Endothelial cell of umbilical vein (primary cell): ENCODE measurements at regions of chr6 and their contacts with region 1.

Region 1: GRCh38 chr6:142692942-142693341 is 252.0 kb downstream of the HIVEP2 start:
- DNase-seq: peak; percentile 85
- H3K4me3 ChIP-seq: peak overlapping the region in 1 of 3 experiments; percentile 2
- H3K27ac ChIP-seq: peak overlapping the region; percentile 85
- H3K4me1 ChIP-seq: peaks cover 13% of the 10 kb centered on the region
- H3K27me3 ChIP-seq: no peaks in the 10 kb centered on the region
- CTCF ChIP-seq: peak; percentile 80 to 88
- POLR2A ChIP-seq: no peak

Region 2: GRCh38 chr6:142659661-142660060 is 33.3 kb before region 1 on chr6:
- CTCF ChIA-PET with region 1: no interaction called
- POLR2A ChIA-PET with region 1: no interaction called
- dilution Hi-C with region 1: no loop called
- intact Hi-C with region 1: no loop called
- DNase-seq: no peak
- H3K4me3 ChIP-seq: no peak overlapping the region
- H3K27ac ChIP-seq: no peak overlapping the region
- H3K4me1 ChIP-seq: no peaks in the 10 kb centered on the region
- H3K27me3 ChIP-seq: peaks cover 10% of the 10 kb centered on the region in 2 experiments
- CTCF ChIP-seq: no peak
- POLR2A ChIP-seq: no peak

Region 3: DNA sequence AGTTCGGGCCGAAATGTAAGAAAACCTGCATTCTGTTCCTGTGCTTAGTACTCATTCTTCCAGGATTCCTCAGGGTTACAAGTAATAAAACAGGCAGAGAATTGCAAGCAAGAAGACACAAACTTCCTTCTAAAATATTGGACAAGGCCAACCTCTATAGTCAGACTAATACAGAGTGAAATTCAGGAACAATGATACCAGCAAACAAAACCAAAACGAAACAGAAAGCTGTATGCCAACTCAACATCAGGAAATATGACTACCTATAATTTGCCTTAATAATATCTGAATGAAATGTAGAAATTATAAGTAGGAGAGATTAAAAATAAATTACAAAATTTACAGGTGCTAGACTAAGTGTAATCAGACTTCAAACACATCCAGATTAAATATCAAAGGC is 13.3 kb after region 1 on chr6:
- CTCF ChIA-PET with region 1: interaction called, 16 read pairs
- POLR2A ChIA-PET with region 1: no interaction called
- dilution Hi-C with region 1: no loop called
- intact Hi-C with region 1: no loop called
- DNase-seq: no peak
- H3K4me3 ChIP-seq: no peak overlapping the region
- H3K27ac ChIP-seq: no peak overlapping the region
- H3K4me1 ChIP-seq: peaks cover 7% of the 10 kb centered on the region
- H3K27me3 ChIP-seq: no peaks in the 10 kb centered on the region
- CTCF ChIP-seq: no peak
- POLR2A ChIP-seq: no peak

Region 4: DNA sequence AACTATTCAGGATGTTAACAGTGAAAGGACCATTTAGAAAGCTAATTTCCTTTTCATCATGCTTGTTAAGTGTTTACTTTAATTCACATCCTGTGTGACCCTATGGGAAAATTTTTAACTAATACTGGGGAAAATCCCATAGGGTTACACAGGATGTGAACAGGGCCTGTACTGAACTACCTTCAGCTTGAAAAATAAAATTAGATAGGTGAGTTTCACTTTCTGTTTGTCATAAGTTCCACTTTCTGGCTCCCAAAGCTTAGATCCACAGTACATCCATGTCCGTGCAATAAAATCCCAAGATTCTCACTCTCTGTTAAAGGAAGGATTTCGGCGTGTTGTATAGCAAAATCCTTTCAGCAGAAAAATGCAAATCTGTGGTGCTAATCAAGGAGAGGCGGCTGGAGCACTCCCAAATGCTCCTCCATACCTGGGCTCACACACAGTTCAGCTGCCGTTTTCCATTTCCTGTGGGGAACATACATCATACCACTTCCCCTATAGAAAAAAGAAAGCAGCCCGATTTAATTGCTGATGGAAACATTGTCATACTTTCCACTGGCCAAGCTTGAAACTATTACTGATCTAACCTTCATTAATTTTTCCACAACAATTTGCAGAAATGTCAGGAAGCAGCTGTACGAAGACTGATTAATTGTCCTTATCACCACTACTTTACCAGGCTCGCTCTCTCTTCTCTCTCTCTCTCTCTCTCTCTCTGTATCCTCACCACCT is 126.8 kb after region 1 on chr6:
- CTCF ChIA-PET with region 1: interaction called, 8 read pairs
- POLR2A ChIA-PET with region 1: no interaction called
- dilution Hi-C with region 1: no loop called
- intact Hi-C with region 1: loop called (anchors 1 kb)
- DNase-seq: peak; percentile 95
- H3K4me3 ChIP-seq: peak overlapping the region; percentile 16 to 71 (median 27)
- H3K27ac ChIP-seq: peak overlapping the region; percentile 93
- H3K4me1 ChIP-seq: peaks cover 16% of the 10 kb centered on the region
- H3K27me3 ChIP-seq: no peaks in the 10 kb centered on the region
- CTCF ChIP-seq: no peak
- POLR2A ChIP-seq: no peak

Region 5: DNA sequence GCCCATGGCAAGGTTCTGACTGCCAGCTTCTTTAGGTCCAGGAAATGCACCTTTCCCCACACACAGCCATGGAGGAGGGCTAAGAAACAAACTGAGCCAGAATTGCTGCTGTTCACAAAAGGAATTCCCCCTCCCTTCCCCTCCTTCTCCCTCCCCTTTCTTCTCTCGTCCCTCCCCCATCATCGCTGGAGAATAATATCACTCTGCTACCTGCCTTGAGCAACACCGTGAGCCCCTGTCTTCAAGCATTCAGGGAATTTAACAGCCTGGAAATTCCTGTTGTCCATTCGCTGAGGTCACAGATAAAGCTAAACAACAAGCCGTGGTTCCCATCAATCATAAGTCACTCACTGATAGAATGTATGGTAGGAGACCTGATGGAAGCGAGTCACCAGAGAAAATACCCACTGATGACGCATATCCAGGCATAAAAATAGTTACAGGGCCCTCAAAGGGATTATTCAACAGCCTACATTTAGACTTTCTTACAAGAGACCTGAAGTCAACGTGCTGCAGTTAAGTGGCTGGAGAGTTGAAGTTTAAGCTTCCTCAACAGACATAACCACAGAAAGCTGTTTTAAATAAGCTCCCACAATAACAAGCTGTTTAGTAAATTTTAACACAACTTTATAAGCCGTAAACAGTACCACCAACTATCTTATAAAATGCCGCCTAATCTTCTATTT is 192.4 kb after region 1 on chr6:
- CTCF ChIA-PET with region 1: interaction called, 21 read pairs
- POLR2A ChIA-PET with region 1: no interaction called
- dilution Hi-C with region 1: no loop called
- intact Hi-C with region 1: loop called (anchors 1 kb)
- DNase-seq: peak; percentile 98
- H3K4me3 ChIP-seq: peak overlapping the region in 2 of 3 experiments; percentile 1 to 9
- H3K27ac ChIP-seq: peak overlapping the region; percentile 89
- H3K4me1 ChIP-seq: peaks cover 16% of the 10 kb centered on the region
- H3K27me3 ChIP-seq: no peaks in the 10 kb centered on the region
- CTCF ChIP-seq: no peak
- POLR2A ChIP-seq: peak; percentile 49

Region 6: DNA sequence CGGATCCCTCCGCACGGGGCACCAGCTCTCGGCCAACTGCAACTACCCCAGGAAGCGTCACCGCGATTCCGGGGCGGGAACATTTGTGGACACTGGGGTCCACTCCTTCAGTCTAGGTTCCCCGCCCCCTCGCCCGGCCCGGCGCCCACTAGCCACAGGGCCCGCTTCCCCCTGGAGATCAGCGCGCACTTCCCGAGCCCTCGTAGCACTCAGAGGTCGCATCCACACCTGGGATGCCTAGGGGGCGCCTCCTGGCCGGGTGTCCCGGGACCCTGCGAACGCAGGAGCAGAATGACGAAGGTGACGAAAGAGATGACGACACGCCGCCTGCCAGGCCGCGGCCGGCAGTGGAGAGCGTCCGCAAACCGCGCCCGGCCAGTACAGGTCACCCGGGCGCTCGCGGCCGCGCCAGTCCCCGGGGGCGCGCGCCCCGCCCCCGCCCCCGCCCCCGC is 367.4 kb after region 1 on chr6:
- CTCF ChIA-PET with region 1: no interaction called
- POLR2A ChIA-PET with region 1: no interaction called
- dilution Hi-C with region 1: no loop called
- intact Hi-C with region 1: loop called (anchors 1 kb)
- DNase-seq: peak; percentile 82
- H3K4me3 ChIP-seq: peak overlapping the region; percentile 35 to 76 (median 67)
- H3K27ac ChIP-seq: peak overlapping the region; percentile 83
- H3K4me1 ChIP-seq: peaks cover 10% of the 10 kb centered on the region
- H3K27me3 ChIP-seq: no peaks in the 10 kb centered on the region
- CTCF ChIP-seq: peak in 1 of 2 donors; percentile 15
- POLR2A ChIP-seq: no peak

Region 7: GRCh38 chr6:143427109-143427817 is 734.3 kb after region 1 on chr6:
- CTCF ChIA-PET with region 1: interaction called, 105 read pairs
- POLR2A ChIA-PET with region 1: no interaction called
- dilution Hi-C with region 1: no loop called
- intact Hi-C with region 1: loop called (anchors 1 kb)
- DNase-seq: peak; percentile 66
- H3K4me3 ChIP-seq: no peak overlapping the region
- H3K27ac ChIP-seq: no peak overlapping the region
- H3K4me1 ChIP-seq: no peaks in the 10 kb centered on the region
- H3K27me3 ChIP-seq: no peaks in the 10 kb centered on the region
- CTCF ChIP-seq: peak; percentile 93 to 96
- POLR2A ChIP-seq: no peak